Activated naive CD4-positive, alpha-beta T cell treated with anti-CD3 and anti-CD28 coated beads, Interleukin-2, amount 10 ng/mL, durations not matched to agents 7 days and 5 days (primary cell): ENCODE measurements at regions of chr17 and their contacts with region 1.

Region 1: DNA sequence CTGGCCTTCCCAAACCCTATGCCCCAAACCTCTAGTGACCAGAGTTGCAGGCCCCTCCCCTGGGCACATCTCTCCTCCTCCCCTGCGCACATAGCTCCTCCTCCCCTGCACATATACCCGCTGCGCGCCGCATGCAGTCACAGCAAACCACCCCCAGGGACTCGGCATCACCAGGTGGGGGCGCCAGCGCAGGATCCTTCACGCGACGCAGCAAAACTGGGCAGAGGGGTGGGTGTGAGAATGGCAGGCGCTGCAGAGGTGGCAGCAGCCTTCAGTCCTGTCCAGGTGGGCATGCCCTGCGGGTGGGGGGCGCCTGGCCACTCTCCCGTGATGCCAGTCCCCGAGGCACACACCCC is 5.6 kb downstream of the CORO6 start:
- DNase-seq: peak; percentile 95
- H3K4me3 Mint-ChIP-seq: peak overlapping the region; percentile 81
- H3K27ac Mint-ChIP-seq: peak overlapping the region; percentile 84
- H3K4me1 Mint-ChIP-seq: peaks cover 62% of the 10 kb centered on the region
- H3K27me3 Mint-ChIP-seq: peaks cover 59% of the 10 kb centered on the region

Region 2: GRCh38 chr17:29495011-29495410 is 122.1 kb before region 1 on chr17:
- CTCF ChIA-PET with region 1: no interaction called
- DNase-seq: no peak
- H3K4me3 Mint-ChIP-seq: no peak overlapping the region
- H3K27ac Mint-ChIP-seq: no peak overlapping the region
- H3K4me1 Mint-ChIP-seq: peaks cover 3% of the 10 kb centered on the region
- H3K27me3 Mint-ChIP-seq: no peaks in the 10 kb centered on the region

Region 3: DNA sequence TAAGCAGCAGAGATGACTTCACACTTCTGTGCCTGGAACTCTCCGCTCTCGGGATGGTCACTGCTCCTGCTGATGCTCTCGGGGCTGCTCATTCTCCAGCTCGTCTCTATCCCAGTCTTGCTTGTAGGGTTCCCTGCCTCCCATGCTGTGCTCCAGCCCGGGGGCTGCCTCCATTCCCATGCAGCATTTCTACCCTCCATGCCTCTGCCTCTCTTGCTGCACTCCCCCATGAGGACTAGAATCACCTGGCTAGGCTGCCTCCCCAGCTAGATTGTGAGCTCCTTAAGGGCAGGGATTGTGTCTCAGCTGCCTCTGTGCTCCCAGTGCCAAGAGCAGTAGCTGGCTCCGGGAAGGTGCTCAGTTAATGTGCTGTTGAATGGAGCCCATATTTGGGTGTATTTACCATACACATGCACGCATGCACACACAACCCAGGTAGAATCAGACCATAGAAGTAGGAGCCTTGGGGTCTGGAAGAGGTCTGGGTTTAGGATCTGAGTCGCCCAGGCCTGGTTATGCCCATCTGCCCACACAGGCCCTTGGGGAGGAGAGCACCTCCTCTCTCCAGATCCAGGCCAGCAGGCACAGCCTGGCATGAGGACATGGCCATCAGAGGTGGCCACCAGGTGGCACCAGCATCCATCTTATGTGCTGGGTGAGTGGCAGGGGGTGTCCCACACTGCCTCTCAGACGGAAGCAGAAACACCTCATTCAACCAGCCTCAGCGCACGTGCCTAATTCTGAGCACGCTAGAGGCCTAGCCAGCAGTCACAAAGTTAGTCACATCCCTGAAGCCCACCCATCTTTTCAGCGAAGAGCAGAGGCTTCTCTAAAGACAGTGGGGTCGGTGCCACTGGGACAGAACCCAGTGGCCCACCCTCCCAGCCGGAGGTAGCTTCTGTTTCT is 37.0 kb before region 1 on chr17:
- CTCF ChIA-PET with region 1: interaction called, 16 read pairs
- DNase-seq: peak; percentile 93
- H3K4me3 Mint-ChIP-seq: no peak overlapping the region
- H3K27ac Mint-ChIP-seq: peak overlapping the region; percentile 72
- H3K4me1 Mint-ChIP-seq: peaks cover 29% of the 10 kb centered on the region
- H3K27me3 Mint-ChIP-seq: no peaks in the 10 kb centered on the region

Region 4: DNA sequence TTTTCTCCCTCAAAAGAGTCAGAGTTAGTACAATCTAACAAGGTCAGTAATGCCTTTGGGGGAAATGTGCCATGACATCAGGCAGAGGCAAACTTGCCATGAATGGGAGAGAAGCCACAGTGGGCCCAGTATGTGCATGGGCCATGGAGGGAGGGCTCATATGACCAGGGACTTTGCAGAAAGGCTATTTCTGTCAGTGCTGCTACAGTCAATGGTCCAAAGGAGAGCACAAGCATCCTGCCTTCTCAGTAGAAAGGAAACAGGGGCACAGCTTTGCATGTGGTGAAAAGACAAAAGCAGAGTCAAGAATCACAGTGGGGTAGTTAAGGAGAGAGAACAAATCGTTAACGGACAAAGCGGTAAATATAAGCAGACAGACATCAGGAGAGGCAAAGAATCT is 16.8 kb after region 1 on chr17:
- CTCF ChIA-PET with region 1: interaction called, 25 read pairs
- DNase-seq: no peak
- H3K4me3 Mint-ChIP-seq: no peak overlapping the region
- H3K27ac Mint-ChIP-seq: peak overlapping the region; percentile 4
- H3K4me1 Mint-ChIP-seq: peaks cover 23% of the 10 kb centered on the region
- H3K27me3 Mint-ChIP-seq: no peaks in the 10 kb centered on the region

Region 5: GRCh38 chr17:29777663-29778062 is 160.6 kb after region 1 on chr17:
- CTCF ChIA-PET with region 1: interaction called, 30 read pairs
- DNase-seq: no peak
- H3K4me3 Mint-ChIP-seq: no peak overlapping the region
- H3K27ac Mint-ChIP-seq: no peak overlapping the region
- H3K4me1 Mint-ChIP-seq: peaks cover 11% of the 10 kb centered on the region
- H3K27me3 Mint-ChIP-seq: no peaks in the 10 kb centered on the region